Cardiac septum (tissue), 1 donor: ENCODE measurements at regions of chr2 and their contacts with region 1.

Region 1: DNA sequence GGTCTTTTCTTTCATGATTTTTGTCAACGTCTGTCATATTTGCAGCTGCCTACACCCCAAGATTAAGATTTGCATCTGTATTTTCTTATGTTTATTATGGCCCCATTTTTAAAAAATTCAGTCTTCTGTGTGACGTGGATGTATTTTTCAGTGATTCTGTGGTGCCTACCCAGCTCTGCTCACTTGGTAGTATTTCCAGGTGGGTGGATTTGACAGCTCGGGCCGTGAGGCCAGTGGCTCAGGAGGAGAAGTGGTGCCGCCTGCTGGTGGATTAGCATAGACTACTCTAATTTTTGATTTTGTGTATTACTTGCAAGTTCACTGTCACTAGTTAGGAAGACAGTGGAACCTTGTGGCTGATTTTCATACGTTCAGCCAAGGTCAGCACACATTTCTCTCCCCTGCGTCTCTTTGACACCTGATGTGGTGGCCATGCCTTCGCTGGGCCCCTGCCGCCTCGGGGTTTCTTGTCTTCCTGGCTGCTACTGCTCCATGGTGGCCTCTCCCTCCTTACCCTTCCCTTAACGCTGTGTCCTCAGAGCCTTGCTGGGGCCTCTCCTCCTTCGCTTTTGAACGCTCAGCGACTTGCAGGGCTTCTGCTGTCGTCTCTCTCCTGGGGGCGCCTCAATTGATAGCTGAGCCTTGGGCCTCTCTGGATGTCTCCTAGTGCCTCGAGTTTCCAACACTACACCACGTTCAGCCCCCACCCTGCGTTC is 89.3 kb downstream of the DGKD start:
- DNase-seq: peak; percentile 80

Region 2: DNA sequence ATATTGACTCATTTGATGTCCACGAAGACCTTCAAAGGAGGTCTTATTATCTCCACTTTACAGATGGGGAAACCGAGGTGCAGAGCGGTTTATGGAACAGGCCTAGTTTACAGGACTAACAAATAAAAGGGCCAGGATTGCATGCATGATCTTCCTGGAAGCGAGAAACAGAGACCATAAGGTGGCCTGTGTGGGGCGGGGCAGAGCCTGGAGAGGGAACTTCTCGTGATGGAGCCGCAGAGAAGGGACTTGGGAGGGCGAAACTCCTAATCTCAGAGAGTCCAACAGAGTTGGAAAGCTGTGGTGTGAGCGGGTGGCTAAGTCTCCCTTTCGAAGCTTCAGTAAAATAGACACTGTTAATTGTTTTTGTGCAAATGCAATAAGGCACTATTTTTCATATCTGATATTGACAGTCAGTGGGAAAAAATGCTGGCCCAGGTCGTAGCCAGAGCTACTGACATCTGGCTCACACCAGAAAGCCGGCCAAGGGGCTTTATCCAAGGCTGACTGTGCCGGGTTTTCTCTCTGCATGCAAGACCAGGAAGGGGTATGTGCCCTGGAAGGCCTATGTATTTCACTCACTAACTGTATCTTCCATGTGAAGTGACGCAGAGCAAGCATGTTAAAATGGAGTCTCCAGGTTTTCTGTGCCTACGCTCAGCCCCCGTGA is 379.0 kb before region 1 on chr2:
- intact Hi-C with region 1: no loop called
- DNase-seq: peak; percentile 71

Region 3: GRCh38 chr2:233288719-233289118 is 154.9 kb before region 1 on chr2:
- intact Hi-C with region 1: loop called (anchors 10 kb)
- DNase-seq: no peak

Region 4: GRCh38 chr2:233353769-233354499 is 89.7 kb before region 1 on chr2 and contains the start of gene DGKD:
- intact Hi-C with region 1: loop called (anchors 2 kb)
- DNase-seq: peak; percentile 83
- total RNA-seq, gene DGKD: 100 TPM

Region 5: DNA sequence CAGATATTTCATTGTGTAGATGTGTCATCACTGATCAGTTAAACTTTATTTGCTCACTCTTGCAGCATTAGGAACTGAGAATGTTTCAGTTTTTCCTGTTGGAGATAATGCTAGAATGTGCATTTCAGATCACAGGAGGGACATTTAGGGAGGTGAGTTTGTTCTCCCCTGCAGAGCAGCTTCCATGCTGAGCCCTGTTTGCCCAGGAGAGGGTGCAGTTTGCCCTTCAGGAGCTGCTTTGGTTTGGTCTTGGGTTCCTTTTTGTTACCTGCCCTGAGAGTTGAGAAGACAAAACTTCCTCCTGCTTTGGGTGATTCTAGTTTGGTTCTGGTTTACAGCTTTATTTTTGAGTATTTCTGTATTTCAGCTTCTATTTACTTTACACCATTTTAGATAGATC is 39.4 kb before region 1 on chr2:
- intact Hi-C with region 1: loop called (anchors 1 kb)
- DNase-seq: no peak